ENCODE measurements at regions of chr9 and their contacts with region 1.

Region 1: DNA sequence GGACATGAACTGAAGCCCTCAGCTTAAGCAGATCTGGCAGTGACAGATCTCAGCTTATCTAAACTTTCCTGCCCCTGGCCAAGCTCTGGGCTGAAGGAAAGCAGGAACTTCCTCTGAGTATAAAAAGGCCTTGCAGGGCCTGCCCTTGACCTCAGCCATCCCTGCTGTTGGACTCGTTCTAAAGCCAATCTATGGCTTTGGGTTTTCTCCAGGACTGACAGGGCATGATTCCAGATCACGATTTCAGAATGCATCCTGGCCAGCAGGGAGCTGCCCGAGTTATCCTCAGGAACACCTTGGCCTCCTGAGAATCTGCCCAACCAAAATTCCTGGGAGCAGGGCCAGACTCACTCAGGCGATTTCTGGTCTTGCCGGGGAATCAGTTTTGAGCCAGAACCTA is 502.7 kb downstream of the TLE4 start:
- DNase-seq: peak in 1 of 5 donors; percentile 6
- ATAC-seq: peak in 3 of 4 donors; percentile 22 to 66 (median 48)
- H3K4me3 ChIP-seq: no peak overlapping the region
- H3K27ac ChIP-seq: no peak overlapping the region
- H3K4me1 ChIP-seq: peaks cover 0 to 8% (median 1%) of the 10 kb centered on the region in 12 donors
- H3K27me3 ChIP-seq: no peaks in the 10 kb centered on the region
- CTCF ChIP-seq: no peak
- POLR2A ChIP-seq: no peak

Region 2: DNA sequence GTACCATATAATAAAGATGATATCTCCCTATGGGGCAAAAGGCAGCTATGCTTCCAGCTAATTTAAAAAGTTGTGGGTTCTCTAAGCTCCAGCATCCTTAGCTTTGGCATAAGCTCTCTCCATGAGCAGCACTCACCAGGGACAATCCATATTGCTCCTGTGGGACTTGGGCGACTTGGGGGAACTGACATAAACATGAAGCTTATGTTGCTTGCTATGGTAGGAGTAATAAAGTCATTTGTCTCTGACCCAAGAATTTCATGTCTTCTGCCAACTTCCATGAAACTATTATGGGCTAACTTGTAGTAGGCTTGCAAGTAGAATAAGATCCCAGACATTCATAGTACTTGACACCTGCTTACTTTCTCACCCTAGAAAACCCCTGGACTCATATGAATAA is 538.9 kb before region 1 on chr9:
- intact Hi-C with region 1: loop called in 1 of 10 experiments (anchors 10 kb)
- DNase-seq: no peak
- ATAC-seq: no peak
- H3K4me3 ChIP-seq: no peak overlapping the region
- H3K27ac ChIP-seq: no peak overlapping the region
- H3K4me1 ChIP-seq: no peaks in the 10 kb centered on the region
- H3K27me3 ChIP-seq: no peaks in the 10 kb centered on the region
- CTCF ChIP-seq: no peak
- POLR2A ChIP-seq: no peak

Measured in heart left ventricle (tissue), 16 donors.